Right cardiac atrium (tissue), 5 donors: ENCODE measurements at regions of chrX and their contacts with region 1.

Region 1: GRCh38 chrX:109856974-109857373 is 123.9 kb upstream of the ACSL4 start:
- DNase-seq: no peak
- ATAC-seq: no peak
- H3K4me3 ChIP-seq: no peak overlapping the region
- H3K27ac ChIP-seq: no peak overlapping the region
- H3K4me1 ChIP-seq: no peaks in the 10 kb centered on the region
- H3K27me3 ChIP-seq: no peaks in the 10 kb centered on the region

Region 2: GRCh38 chrX:109732780-109733657 is 124.0 kb before region 1 on chrX and contains the start of gene ACSL4:
- intact Hi-C with region 1: loop called in 1 of 4 experiments (anchors 10 kb)
- DNase-seq: peak; percentile 91 to 96 (median 96)
- ATAC-seq: peak; percentile 99 to 100
- H3K4me3 ChIP-seq: peak within 1 kb of the TSS; percentile 96
- H3K27ac ChIP-seq: peak within 1 kb of the TSS; percentile 91
- H3K4me1 ChIP-seq: no peaks in the 10 kb centered on the region
- H3K27me3 ChIP-seq: no peaks in the 10 kb centered on the region
- total RNA-seq, gene ACSL4: 41.8 to 56.1 (median 47.4) TPM